ENCODE measurements at regions of chr11 and their contacts with region 1.

Region 1: GRCh38 chr11:35662649-35663407 is at the start of gene TRIM44:
- DNase-seq: peak; percentile 91
- H3K4me3 Mint-ChIP-seq: peak within 1 kb of the TSS; percentile 94
- H3K27ac Mint-ChIP-seq: peak within 1 kb of the TSS; percentile 94
- H3K4me1 Mint-ChIP-seq: peaks cover 43% of the 10 kb centered on the region
- H3K27me3 Mint-ChIP-seq: peaks cover 5% of the 10 kb centered on the region
- total RNA-seq, gene TRIM44: 27.3 to 30.0 TPM

Region 2: GRCh38 chr11:35598254-35599125 is 64.3 kb before region 1 on chr11:
- CTCF ChIA-PET with region 1: no interaction called
- POLR2A ChIA-PET with region 1: no interaction called
- intact Hi-C with region 1: loop called (anchors 2 kb)
- DNase-seq: peak; percentile 59
- H3K4me3 Mint-ChIP-seq: no peak overlapping the region
- H3K27ac Mint-ChIP-seq: no peak overlapping the region
- H3K4me1 Mint-ChIP-seq: peaks cover 13% of the 10 kb centered on the region
- H3K27me3 Mint-ChIP-seq: peaks cover 30% of the 10 kb centered on the region

Region 3: DNA sequence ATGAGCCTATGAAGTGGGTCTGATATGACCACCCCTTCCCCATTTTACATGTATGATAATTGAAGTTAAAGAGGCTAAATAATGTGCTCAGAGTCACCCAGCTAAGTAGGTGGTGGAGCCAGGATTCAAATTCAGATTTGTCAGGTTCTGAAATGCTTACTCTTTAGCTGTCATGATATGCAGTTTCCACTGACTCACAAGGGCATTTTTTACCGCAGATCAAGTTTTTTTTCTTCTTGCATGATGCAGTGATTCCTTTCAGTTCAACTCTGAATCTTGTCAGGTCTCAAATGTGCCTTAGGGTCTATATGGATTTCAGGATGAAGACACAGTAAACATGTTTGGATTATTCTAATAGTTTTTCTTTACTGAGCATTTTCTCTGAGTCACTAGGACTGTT is 12.8 kb before region 1 on chr11:
- CTCF ChIA-PET with region 1: no interaction called
- POLR2A ChIA-PET with region 1: no interaction called
- intact Hi-C with region 1: loop called (anchors 2 kb)
- DNase-seq: no peak
- H3K4me3 Mint-ChIP-seq: no peak overlapping the region
- H3K27ac Mint-ChIP-seq: no peak overlapping the region
- H3K4me1 Mint-ChIP-seq: peaks cover 10% of the 10 kb centered on the region
- H3K27me3 Mint-ChIP-seq: peaks cover 31% of the 10 kb centered on the region

Region 4: DNA sequence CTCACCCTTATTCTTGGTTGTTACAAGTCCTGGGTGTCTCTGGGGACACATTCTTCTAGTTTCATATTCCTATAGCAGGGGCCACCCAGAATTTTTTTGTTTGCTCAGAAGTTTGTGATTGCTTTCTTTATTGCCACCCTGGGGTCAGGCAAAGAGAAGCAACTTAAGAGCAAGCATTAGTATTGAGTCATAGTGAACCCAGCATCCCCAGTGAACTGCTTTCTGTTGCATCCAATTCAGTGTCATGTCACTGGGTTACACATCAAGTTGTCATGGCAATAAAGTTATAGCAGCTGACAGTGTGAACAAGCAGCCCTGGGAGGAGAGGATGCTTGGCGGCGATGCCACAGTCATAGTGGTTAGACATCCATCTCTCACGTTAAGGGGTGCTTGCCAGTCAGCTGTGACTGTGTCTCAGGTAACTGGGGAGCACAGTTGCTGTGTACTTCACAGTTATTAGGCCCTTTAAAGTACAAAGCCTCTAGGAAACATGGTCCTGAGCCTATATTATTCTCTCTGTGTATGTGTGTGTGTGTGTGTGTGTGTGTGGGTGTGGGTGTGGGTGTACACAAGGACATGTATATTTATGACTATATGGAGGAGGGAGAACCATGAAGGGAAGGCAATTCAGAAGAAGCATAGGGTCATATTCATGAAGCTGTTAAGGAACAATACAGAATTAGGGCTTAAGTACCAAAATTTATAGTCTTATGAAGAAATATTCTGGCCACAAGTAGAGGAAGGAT is 52.2 kb after region 1 on chr11:
- CTCF ChIA-PET with region 1: no interaction called
- POLR2A ChIA-PET with region 1: no interaction called
- intact Hi-C with region 1: loop called (anchors 1 kb)
- DNase-seq: peak; percentile 60
- H3K4me3 Mint-ChIP-seq: no peak overlapping the region
- H3K27ac Mint-ChIP-seq: no peak overlapping the region
- H3K4me1 Mint-ChIP-seq: peaks cover 31% of the 10 kb centered on the region
- H3K27me3 Mint-ChIP-seq: no peaks in the 10 kb centered on the region

Region 5: DNA sequence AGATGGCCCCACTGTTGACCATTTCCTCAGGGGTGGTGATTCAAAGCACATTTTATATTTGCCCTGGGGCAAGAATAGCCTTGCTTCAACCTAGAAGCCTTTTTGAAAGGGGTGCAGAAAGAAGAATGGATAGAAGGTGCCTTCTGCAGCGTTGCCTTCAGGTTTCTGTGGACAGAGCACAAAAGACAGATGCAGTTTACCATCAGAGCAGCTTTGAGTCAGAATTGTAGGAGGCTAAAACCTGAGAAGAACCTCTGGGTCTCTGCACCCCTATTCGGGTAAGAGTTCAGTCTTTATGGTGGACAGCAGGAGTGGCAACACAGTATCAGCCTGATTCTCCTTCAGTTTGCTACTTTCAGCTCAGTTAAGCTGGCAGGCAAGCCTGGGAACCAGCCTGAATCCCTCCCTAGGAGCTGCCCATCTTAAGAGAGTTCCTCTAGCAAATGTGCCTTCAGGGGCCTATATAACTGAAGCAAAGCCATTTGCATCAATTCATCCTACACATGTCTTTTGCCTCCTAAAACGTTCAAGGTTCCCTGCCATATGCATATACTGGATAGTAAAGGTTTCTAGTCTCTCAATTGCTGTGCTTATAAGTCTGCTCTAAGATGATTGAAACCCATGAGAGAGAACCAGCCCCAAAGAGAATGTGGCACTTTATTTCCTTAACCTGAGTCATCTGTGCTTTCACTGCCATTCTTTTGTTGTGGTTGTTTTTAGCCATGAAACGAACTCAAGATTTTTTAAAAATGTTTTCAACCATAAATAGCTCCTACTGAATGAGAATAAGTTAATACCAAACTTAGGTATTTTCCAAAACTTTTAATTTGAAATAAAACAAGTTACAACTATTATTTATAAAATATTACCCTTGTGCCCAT is 122.7 kb after region 1 on chr11:
- CTCF ChIA-PET with region 1: no interaction called
- POLR2A ChIA-PET with region 1: no interaction called
- intact Hi-C with region 1: loop called (anchors 5 kb)
- DNase-seq: no peak
- H3K4me3 Mint-ChIP-seq: no peak overlapping the region
- H3K27ac Mint-ChIP-seq: no peak overlapping the region
- H3K4me1 Mint-ChIP-seq: peaks cover 38% of the 10 kb centered on the region
- H3K27me3 Mint-ChIP-seq: no peaks in the 10 kb centered on the region

Region 6: GRCh38 chr11:36509694-36510566 is 847.1 kb after region 1 on chr11 and contains the start of gene TRAF6:
- CTCF ChIA-PET with region 1: no interaction called
- POLR2A ChIA-PET with region 1: interaction called, 3 read pairs
- intact Hi-C with region 1: loop called (anchors 2 kb)
- DNase-seq: peak; percentile 92
- H3K4me3 Mint-ChIP-seq: peak within 1 kb of the TSS; percentile 94
- H3K27ac Mint-ChIP-seq: peak within 1 kb of the TSS; percentile 86
- H3K4me1 Mint-ChIP-seq: peaks cover 27% of the 10 kb centered on the region
- H3K27me3 Mint-ChIP-seq: peaks cover 5% of the 10 kb centered on the region
- total RNA-seq, gene TRAF6: 12.0 to 12.1 TPM

Measured in activated CD4-positive, alpha-beta memory T cell treated with anti-CD3 and anti-CD28 coated beads for 36 hours (primary cell).